PC-9 (cell line): ENCODE measurements at regions of chr6 and their contacts with region 1.

Region 1: GRCh38 chr6:158769771-158770432 is 49.3 kb downstream of the EZR start:
- DNase-seq: no peak
- H3K4me3 ChIP-seq: no peak overlapping the region
- H3K27ac ChIP-seq: peak overlapping the region; percentile 86
- H3K4me1 ChIP-seq: peaks cover 40% of the 10 kb centered on the region
- H3K27me3 ChIP-seq: no peaks in the 10 kb centered on the region
- CTCF ChIP-seq: no peak

Region 2: DNA sequence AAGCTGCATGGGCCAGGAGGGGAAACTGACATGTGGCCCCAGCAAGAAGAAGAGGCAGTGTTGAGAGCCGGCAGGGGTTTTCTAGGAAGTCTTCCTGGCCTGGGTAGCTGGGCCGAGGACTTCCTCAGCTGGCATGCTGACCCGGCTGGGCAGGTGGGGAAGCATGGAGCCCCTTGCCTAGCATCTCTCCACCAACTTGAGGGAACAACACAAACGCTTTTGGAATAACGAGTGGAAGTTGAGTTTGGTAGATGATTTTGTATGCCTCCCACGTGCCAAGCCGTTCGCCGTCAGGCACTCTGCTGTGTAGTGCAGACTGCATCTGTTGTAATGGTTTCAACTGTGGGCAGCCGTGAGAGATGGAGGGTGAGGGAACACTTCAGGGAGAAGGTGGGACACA is 202.8 kb before region 1 on chr6:
- CTCF ChIA-PET with region 1: no interaction called
- POLR2A ChIA-PET with region 1: interaction called, 10 read pairs
- intact Hi-C with region 1: no loop called
- DNase-seq: no peak
- H3K4me3 ChIP-seq: no peak overlapping the region
- H3K27ac ChIP-seq: no peak overlapping the region
- H3K4me1 ChIP-seq: peaks cover 38% of the 10 kb centered on the region
- H3K27me3 ChIP-seq: no peaks in the 10 kb centered on the region
- CTCF ChIP-seq: no peak

Region 3: DNA sequence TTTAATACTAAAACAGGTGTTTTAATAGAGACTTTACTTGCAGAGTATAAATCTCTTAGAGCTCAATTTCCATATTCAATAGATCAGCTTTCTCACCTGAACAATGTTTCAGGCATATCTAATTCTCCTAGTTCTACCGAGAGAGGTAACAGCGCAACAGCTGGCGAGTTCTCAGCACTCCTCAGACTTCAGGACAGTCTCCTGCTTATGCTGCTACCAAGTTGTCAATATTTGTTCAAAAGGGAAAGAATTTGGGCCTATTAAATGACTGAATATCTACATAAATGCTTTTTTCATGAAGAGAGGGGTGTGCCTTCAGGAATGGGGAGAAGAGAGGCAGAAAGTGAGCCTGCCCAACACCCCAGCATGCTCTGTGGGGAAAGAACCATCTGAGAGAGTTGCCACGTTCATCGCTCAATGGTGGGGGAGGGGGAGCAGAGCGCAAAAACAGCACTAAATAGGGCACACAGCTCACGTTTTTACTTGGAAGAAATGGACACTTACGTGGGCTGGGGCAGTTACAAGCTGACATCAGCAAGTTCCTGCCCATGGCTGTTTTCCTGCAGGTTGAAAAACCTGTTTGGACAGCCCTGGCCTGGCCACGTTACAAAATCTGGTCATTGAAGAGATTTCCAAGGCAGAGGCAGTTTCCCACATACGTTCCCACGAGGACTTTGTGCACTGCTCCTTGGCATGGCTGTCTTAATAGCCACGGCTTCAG is 11.2 kb after region 1 on chr6:
- CTCF ChIA-PET with region 1: no interaction called
- POLR2A ChIA-PET with region 1: no interaction called
- intact Hi-C with region 1: loop called (anchors 1 kb)
- DNase-seq: peak; percentile 65 to 89
- H3K4me3 ChIP-seq: no peak overlapping the region; the same call in 1 of the 2 replicates
- H3K27ac ChIP-seq: peak overlapping the region; percentile 81
- H3K4me1 ChIP-seq: peaks cover 100% of the 10 kb centered on the region
- H3K27me3 ChIP-seq: no peaks in the 10 kb centered on the region
- CTCF ChIP-seq: no peak

Region 4: DNA sequence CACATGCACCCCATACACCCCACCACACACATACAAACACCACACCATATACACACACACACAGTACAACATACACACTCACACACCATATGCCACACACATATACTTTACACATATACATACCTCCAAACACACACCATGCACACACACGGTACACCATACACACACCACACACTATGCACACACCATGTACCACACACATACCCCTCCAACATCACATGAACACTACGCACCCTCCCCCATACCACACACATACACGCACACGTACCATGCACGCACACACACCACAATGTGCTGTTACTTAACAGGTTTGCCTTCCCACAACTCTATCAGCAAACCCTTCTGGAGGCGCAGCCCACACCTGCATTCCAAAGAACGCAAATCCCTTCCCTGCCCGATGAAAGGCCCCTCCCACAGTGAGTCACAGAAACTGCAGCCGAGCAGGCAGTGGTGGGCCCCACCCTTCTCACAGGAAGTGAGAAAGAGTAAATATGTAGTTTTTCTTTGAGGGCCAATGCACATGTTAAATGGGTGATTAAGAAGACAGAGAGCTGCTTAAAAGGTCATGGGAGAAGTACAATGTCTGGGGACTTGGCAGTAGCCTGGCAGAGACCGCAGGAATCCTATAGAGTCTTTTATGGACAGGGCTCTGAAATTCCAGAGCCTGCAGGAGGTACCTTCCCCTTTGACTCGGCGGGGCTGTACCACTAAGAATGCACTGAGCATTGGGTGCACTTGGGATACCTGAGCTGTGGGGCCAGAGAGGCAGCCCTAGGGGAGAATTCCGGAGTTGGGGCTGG is 83.4 kb after region 1 on chr6:
- CTCF ChIA-PET with region 1: no interaction called
- POLR2A ChIA-PET with region 1: interaction called, 7 read pairs
- intact Hi-C with region 1: loop called (anchors 2 kb)
- DNase-seq: peak; percentile 92 to 100
- H3K4me3 ChIP-seq: peak overlapping the region; percentile 51
- H3K27ac ChIP-seq: peak overlapping the region; percentile 99
- H3K4me1 ChIP-seq: peaks cover 93% of the 10 kb centered on the region
- H3K27me3 ChIP-seq: no peaks in the 10 kb centered on the region
- CTCF ChIP-seq: no peak

Region 5: GRCh38 chr6:158923805-158924498 is 154.1 kb after region 1 on chr6:
- CTCF ChIA-PET with region 1: interaction called, 17 read pairs
- POLR2A ChIA-PET with region 1: no interaction called
- intact Hi-C with region 1: no loop called
- DNase-seq: no peak
- H3K4me3 ChIP-seq: no peak overlapping the region
- H3K27ac ChIP-seq: no peak overlapping the region
- H3K4me1 ChIP-seq: peaks cover 15% of the 10 kb centered on the region
- H3K27me3 ChIP-seq: no peaks in the 10 kb centered on the region
- CTCF ChIP-seq: no peak